GM13977 (cell line): ENCODE measurements at regions of chr5 and their contacts with region 1.

Region 1: DNA sequence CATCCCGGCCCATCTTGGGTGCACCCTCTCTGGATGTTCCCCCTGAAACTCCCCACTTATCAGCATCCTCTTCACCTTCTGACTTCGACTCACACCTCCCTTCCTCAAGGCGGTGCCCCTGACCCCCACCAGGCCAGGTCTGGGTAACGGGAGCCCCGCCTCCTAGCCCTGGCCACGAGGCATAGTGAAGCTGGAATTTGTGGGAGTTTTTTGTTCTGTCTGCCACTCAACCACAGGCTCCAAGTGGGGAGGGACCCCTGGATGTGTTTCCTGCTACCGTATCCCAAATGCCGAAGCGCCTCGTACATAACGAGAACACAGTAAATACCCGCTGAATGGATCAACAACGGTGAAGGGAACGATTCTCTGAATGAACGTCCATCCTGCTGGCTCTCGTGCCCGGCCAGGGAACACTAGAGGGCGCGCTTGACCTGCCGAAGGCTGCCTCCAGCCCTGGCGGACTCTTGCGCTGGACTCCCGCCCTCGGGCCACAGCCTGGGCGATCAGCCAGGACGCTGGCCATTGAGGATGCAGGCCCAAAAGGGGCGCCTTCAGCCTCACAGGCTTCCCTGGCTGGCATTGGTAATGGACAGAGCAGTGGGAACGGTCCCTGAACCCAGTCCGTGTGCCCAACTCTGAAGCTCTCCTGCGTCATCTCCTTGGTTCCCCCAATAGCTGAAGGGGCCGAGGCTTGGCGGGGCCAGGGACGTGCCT is 47.3 kb upstream of the PHYKPL start:
- DNase-seq: peak; percentile 87
- CTCF ChIP-seq: peak; percentile 97

Region 2: GRCh38 chr5:178551059-178551458 is 271.2 kb after region 1 on chr5:
- in situ Hi-C with region 1: loop called (anchors 10 kb)
- DNase-seq: no peak
- CTCF ChIP-seq: peak; percentile 40

Region 3: GRCh38 chr5:179495906-179496455 is 1216.1 kb after region 1 on chr5:
- in situ Hi-C with region 1: loop called (anchors 25 kb)
- DNase-seq: no peak
- CTCF ChIP-seq: peak; percentile 29